ENCODE measurements at regions of chr10 and their contacts with region 1.

Region 1: DNA sequence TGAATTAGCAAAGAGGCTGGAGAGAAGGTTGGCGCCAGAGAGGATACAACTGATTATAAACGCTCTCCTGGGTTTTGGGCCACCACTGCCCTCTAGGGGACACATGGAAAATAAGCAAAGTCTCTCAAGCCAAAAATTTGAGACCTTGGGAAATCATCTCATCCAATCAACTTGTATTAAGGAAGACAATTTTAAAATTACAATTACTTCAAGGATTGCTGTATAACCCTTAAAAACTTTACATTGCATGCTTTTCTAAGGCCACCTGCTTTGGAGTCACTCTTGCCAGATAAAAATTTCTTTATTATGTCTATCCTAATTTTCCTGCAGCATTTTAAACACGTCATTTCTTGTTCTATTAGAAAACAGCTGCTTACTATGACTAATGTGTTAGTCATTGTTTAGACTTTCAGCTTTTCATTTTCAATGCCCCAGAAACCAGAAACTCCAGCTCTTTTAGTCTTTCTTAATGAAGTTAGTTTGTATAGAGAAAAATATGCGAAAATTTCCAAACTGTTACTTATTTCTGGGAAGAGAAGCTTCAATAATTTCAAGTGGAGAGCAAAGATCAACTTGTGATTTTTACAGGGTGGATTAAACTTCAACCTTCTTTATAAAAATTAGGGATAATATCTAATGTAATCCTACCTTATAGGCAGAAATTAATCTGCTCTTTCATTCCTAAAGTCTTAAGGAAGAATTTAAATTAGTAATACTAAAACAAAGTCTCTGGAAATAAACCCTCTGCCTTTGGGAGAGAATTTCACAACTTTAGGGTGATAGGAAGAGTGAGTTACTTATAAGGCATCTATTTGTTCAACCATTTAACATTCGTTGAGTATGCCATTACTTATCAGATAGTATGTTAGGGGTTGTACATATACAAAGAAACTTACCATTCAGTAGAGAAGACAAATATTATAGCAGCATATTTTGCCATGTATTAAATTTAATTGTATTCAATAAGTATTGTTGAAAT is 20.6 kb upstream of the RHOBTB1 start:
- DNase-seq: peak; percentile 59 to 71
- ATAC-seq: peak; percentile 87 to 97 (median 90)
- H3K4me3 ChIP-seq: no peak overlapping the region
- H3K27ac ChIP-seq: peak overlapping the region; percentile 31
- H3K4me1 ChIP-seq: peaks cover 21% of the 10 kb centered on the region
- H3K27me3 ChIP-seq: no peaks in the 10 kb centered on the region
- CTCF ChIP-seq: peak; percentile 85

Region 2: GRCh38 chr10:60426400-60426799 is 538.1 kb before region 1 on chr10:
- intact Hi-C with region 1: no loop called
- DNase-seq: no peak
- ATAC-seq: no peak
- H3K4me3 ChIP-seq: no peak overlapping the region
- H3K27ac ChIP-seq: no peak overlapping the region
- H3K4me1 ChIP-seq: peaks cover 17% of the 10 kb centered on the region
- H3K27me3 ChIP-seq: no peaks in the 10 kb centered on the region
- CTCF ChIP-seq: no peak

Region 3: DNA sequence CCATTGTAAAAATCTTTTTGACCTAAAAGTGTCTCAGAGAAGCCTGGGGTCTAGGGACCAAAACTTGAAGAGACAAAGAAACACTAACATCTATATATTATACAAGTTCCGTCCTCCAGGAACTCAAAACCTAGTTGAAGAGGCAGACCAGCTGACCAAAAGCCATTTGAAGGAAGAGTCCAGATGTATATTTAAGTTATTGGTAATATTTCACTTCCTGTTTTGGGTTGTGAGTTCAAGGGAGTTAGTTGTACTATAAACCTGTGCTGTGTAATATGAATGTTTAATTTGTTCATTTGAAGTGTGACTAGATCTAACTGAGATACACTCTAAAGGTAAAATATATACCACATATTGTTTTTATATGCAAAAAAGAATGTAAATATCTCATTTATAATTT is 141.2 kb before region 1 on chr10:
- intact Hi-C with region 1: no loop called
- DNase-seq: no peak
- ATAC-seq: no peak
- H3K4me3 ChIP-seq: no peak overlapping the region
- H3K27ac ChIP-seq: no peak overlapping the region
- H3K4me1 ChIP-seq: peaks cover 43% of the 10 kb centered on the region
- H3K27me3 ChIP-seq: no peaks in the 10 kb centered on the region
- CTCF ChIP-seq: no peak

Region 4: DNA sequence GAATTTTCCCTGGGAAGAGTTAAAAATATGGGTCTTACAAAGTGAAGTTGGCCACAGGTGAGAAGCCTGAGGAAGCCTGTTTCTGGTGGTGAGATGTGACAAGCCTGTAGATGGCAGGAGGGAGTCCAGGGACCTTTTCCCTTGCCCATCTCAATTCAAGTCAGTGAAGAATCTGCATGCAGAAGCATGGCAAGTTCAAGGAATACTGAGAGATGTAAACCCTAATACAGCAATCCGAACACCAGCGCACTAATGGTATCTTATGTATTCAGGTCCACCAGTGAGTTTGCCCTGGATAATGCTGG is 94.2 kb before region 1 on chr10:
- intact Hi-C with region 1: loop called in 1 of 2 experiments (anchors 5 kb)
- DNase-seq: no peak
- ATAC-seq: peak in 1 of 4 donors; percentile 30
- H3K4me3 ChIP-seq: no peak overlapping the region
- H3K27ac ChIP-seq: peak overlapping the region; percentile 85
- H3K4me1 ChIP-seq: peaks cover 71% of the 10 kb centered on the region
- H3K27me3 ChIP-seq: no peaks in the 10 kb centered on the region
- CTCF ChIP-seq: peak; percentile 51

Region 5: DNA sequence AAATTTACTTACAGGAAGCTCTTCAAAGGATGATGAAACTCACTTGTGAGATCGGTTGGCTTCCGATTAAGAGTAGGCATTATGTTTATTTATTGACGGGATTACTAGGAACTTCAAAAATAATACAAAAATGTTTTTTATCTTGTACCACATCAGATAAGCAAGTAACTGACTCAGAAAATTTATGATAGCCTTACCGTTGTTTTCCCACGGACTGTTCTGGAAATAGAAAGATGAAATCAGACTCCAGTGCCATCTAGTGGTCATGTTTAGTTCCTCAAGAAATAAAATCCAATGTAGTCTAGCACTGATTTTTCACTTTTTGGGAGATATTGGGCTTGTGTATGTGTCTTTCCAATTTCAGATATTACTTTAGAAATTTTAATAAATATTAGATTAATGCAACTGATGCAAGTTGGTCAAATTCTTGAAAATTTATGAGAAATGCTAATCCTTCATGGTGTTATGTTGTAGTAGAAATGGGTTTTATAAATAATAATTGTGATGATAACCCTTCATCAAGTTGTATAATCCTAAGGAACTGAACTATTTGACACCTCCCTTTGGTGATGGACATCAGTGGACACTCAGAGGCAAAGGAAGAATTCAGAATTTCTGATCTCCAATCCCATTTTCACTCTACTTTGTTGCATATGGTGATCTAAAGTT is 319.8 kb after region 1 on chr10:
- intact Hi-C with region 1: loop called in 1 of 2 experiments (anchors 5 kb)
- DNase-seq: no peak
- ATAC-seq: peak; percentile 66 to 86 (median 72)
- H3K4me3 ChIP-seq: peak overlapping the region; percentile 29
- H3K27ac ChIP-seq: peak overlapping the region; percentile 20
- H3K4me1 ChIP-seq: peaks cover 6% of the 10 kb centered on the region
- H3K27me3 ChIP-seq: no peaks in the 10 kb centered on the region
- CTCF ChIP-seq: peak; percentile 87

Measured in psoas muscle (tissue), 8 donors.